ENCODE measurements at regions of chr7 and their contacts with region 1.

Region 1: DNA sequence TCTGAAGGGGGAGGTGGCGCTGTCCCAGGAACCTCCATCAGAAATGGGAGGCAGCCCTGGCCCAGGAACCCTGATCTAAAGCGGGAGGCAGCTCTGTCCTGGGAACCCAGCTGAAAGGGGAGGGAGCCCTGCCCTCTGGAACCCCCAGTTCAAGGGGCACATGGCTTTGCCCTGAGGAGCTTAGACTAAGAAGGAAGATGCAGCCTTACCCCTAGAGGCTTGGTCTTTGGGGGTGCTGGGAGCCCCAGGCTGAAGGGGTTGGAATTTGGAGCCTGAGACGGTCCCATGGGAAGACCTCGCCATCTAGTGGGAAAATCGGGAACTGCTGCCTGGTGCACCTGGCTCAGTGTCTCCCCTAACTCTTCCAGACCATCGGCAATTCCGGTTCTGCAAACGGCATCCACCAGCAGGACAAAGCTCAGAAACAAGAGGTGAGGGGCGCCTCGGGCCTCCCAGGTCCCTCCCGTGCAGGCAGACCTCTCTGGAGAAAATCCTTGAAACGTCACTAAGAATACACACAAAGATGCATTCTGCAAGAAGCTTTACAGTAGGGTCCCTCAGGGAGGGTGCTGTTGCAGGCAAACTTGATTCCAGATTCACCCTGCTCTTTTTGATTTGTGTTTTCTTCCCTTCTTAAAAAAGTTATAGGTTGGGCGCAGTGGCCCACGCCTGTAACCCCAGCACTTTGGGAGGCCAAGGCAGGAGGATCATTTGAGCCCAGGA is 52.4 kb upstream of the GTF2IRD1 start:
- DNase-seq: peak; percentile 46 to 84 (median 76)
- ATAC-seq: peak; percentile 73
- H3K4me3 ChIP-seq: no peak overlapping the region
- H3K4me3 Mint-ChIP-seq: no peak overlapping the region
- H3K27ac ChIP-seq: no peak overlapping the region
- H3K27ac Mint-ChIP-seq: no peak overlapping the region
- H3K4me1 ChIP-seq: no peaks in the 10 kb centered on the region
- H3K4me1 Mint-ChIP-seq: no peaks in the 10 kb centered on the region
- H3K27me3 ChIP-seq: no peaks in the 10 kb centered on the region
- H3K27me3 Mint-ChIP-seq: no peaks in the 10 kb centered on the region
- CTCF ChIP-seq: peak; percentile 88

Region 2: DNA sequence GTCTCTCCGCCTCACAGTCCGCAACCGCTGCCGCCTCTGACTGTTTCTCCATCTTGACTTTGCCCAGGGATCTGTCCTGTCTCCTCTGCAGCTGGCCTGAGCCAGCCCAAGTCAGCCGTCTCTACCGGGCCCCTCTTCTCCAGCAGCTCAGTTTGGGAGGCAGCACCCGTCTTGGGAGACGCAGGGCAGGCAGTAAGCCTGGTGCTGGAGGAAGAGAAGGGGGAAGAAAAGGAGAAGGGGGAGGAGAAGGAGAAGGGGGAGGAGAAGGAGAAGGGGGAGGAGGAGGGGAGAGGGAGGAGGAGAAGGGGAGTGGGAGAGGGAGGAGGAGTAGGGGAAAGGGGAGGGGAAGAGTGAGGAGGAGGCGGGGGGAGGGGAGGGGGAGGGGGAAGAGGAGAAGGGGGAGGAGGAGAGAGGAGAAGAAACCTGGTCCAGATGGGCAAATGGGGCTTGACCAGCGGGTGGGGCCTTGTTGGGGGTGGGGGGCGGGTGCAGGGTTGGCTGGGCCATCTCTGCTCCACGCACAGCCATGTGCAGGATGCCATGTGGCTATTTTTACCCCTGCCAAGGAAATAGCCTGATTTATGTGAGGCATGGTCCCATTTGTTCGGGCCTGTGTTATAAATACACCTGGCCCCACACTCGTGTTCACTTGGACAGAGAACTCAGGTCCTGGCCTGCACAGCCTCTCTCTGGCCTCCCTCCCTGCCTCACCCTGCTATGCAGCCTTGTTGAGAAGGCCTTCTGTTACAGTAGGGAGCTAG is 1003.6 kb before region 1 on chr7:
- CTCF ChIA-PET with region 1: no interaction called
- POLR2A ChIA-PET with region 1: no interaction called
- intact Hi-C with region 1: no loop called
- DNase-seq: no peak
- ATAC-seq: no peak
- H3K4me3 ChIP-seq: no peak overlapping the region
- H3K4me3 Mint-ChIP-seq: no peak overlapping the region
- H3K27ac ChIP-seq: no peak overlapping the region
- H3K27ac Mint-ChIP-seq: no peak overlapping the region
- H3K4me1 ChIP-seq: no peaks in the 10 kb centered on the region
- H3K4me1 Mint-ChIP-seq: peaks cover 4% of the 10 kb centered on the region
- H3K27me3 ChIP-seq: peaks cover 0 to 2% of the 10 kb centered on the region in 2 experiments
- H3K27me3 Mint-ChIP-seq: peaks cover 3% of the 10 kb centered on the region
- CTCF ChIP-seq: no peak

Region 3: DNA sequence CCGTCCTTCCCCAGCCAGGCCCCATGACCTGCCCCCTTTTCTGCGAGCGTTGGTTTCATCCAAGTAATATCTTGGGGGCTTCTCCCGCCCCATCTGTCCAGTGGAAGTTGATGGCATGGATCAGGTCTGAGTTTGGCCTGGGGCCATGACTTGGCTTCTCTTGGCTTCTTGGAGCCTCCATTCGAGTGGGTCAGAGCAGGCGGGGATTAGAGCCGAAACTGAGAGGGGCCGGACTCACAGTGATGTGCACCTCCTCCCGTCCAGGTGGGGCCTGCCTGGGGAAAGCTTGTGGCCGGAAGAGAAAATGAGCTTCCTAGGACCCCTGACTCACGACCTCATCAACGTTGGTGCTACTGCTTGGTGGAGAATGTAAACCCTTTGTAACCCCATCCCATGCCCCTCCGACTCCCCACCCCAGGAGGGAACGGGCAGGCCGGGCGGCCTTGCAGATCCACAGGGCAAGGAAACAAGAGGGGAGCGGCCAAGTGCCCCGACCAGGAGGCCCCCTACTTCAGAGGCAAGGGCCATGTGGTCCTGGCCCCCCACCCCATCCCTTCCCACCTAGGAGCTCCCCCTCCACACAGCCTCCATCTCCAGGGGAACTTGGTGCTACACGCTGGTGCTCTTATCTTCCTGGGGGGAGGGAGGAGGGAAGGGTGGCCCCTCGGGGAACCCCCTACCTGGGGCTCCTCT is 332.8 kb before region 1 on chr7:
- CTCF ChIA-PET with region 1: interaction called, 74 read pairs
- POLR2A ChIA-PET with region 1: no interaction called
- intact Hi-C with region 1: loop called in 1 of 2 experiments (anchors 1 kb)
- DNase-seq: no peak
- ATAC-seq: no peak
- H3K4me3 ChIP-seq: no peak overlapping the region
- H3K4me3 Mint-ChIP-seq: no peak overlapping the region
- H3K27ac ChIP-seq: no peak overlapping the region
- H3K27ac Mint-ChIP-seq: no peak overlapping the region
- H3K4me1 ChIP-seq: no peaks in the 10 kb centered on the region
- H3K4me1 Mint-ChIP-seq: peaks cover 2% of the 10 kb centered on the region
- H3K27me3 ChIP-seq: no peaks in the 10 kb centered on the region
- H3K27me3 Mint-ChIP-seq: no peaks in the 10 kb centered on the region
- CTCF ChIP-seq: no peak

Region 4: DNA sequence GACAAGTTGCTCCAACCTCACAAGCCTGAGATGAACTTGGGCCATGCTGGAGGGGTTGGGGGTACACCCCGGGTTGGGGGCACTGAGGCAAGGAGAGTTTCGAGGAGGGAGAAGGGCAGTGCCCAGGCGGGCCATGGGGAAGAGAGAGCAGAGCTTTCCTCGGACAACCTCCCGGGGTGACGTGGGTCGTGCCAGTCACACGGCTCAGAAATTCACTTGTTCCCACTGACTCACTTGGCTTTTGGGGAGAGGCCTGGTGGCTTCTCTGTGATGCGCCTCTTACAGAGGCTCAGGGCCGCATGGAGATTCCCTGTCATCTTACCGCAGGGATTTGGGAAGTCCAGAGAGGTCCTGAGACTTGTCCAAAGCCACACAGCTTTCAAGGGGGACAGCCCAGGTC is 188.6 kb before region 1 on chr7:
- CTCF ChIA-PET with region 1: interaction called, 147 read pairs
- POLR2A ChIA-PET with region 1: no interaction called
- intact Hi-C with region 1: no loop called
- DNase-seq: no peak
- ATAC-seq: no peak
- H3K4me3 ChIP-seq: no peak overlapping the region
- H3K4me3 Mint-ChIP-seq: no peak overlapping the region
- H3K27ac ChIP-seq: no peak overlapping the region
- H3K27ac Mint-ChIP-seq: no peak overlapping the region
- H3K4me1 ChIP-seq: peaks cover 11% of the 10 kb centered on the region
- H3K4me1 Mint-ChIP-seq: peaks cover 15% of the 10 kb centered on the region
- H3K27me3 ChIP-seq: no peaks in the 10 kb centered on the region
- H3K27me3 Mint-ChIP-seq: peaks cover 6% of the 10 kb centered on the region
- CTCF ChIP-seq: no peak

Region 5: GRCh38 chr7:74289018-74289658 is 112.2 kb before region 1 on chr7 and contains the start of gene CLIP2:
- CTCF ChIA-PET with region 1: interaction called, 5 read pairs
- POLR2A ChIA-PET with region 1: no interaction called
- intact Hi-C with region 1: loop called in 1 of 2 experiments (anchors 1 kb)
- DNase-seq: peak; percentile 59 to 87 (median 76)
- ATAC-seq: peak; percentile 85
- H3K4me3 ChIP-seq: peak within 1 kb of the TSS; percentile 54 to 75
- H3K4me3 Mint-ChIP-seq: peak within 1 kb of the TSS; percentile 89
- H3K27ac ChIP-seq: no peak within 1 kb of the TSS
- H3K27ac Mint-ChIP-seq: no peak within 1 kb of the TSS
- H3K4me1 ChIP-seq: peaks cover 22% of the 10 kb centered on the region
- H3K4me1 Mint-ChIP-seq: peaks cover 22% of the 10 kb centered on the region
- H3K27me3 ChIP-seq: no peaks in the 10 kb centered on the region
- H3K27me3 Mint-ChIP-seq: peaks cover 8% of the 10 kb centered on the region
- CTCF ChIP-seq: no peak
- total RNA-seq, gene CLIP2: 2.1 to 2.7 TPM

Region 6: GRCh38 chr7:74306730-74307469 is 94.4 kb before region 1 on chr7:
- CTCF ChIA-PET with region 1: no interaction called
- POLR2A ChIA-PET with region 1: no interaction called
- intact Hi-C with region 1: no loop called
- DNase-seq: peak in 1 of 9 experiments; percentile 7
- ATAC-seq: peak; percentile 58
- H3K4me3 ChIP-seq: peak overlapping the region; percentile 12 to 18
- H3K4me3 Mint-ChIP-seq: peak overlapping the region; percentile 72
- H3K27ac ChIP-seq: no peak overlapping the region
- H3K27ac Mint-ChIP-seq: no peak overlapping the region
- H3K4me1 ChIP-seq: peaks cover 16% of the 10 kb centered on the region
- H3K4me1 Mint-ChIP-seq: peaks cover 13% of the 10 kb centered on the region
- H3K27me3 ChIP-seq: peaks cover 0 to 4% of the 10 kb centered on the region in 2 experiments
- H3K27me3 Mint-ChIP-seq: peaks cover 3% of the 10 kb centered on the region
- CTCF ChIP-seq: no peak

Region 7: GRCh38 chr7:74412056-74412455 is 10.8 kb after region 1 on chr7:
- CTCF ChIA-PET with region 1: interaction called, 16 read pairs
- POLR2A ChIA-PET with region 1: no interaction called
- intact Hi-C with region 1: no loop called
- DNase-seq: no peak
- ATAC-seq: no peak
- H3K4me3 ChIP-seq: no peak overlapping the region
- H3K4me3 Mint-ChIP-seq: no peak overlapping the region
- H3K27ac ChIP-seq: no peak overlapping the region
- H3K27ac Mint-ChIP-seq: no peak overlapping the region
- H3K4me1 ChIP-seq: no peaks in the 10 kb centered on the region
- H3K4me1 Mint-ChIP-seq: no peaks in the 10 kb centered on the region
- H3K27me3 ChIP-seq: no peaks in the 10 kb centered on the region
- H3K27me3 Mint-ChIP-seq: no peaks in the 10 kb centered on the region
- CTCF ChIP-seq: no peak

Region 8: GRCh38 chr7:74455291-74455804 is 54.0 kb after region 1 on chr7:
- CTCF ChIA-PET with region 1: no interaction called
- POLR2A ChIA-PET with region 1: no interaction called
- intact Hi-C with region 1: no loop called
- DNase-seq: no peak
- ATAC-seq: no peak
- H3K4me3 ChIP-seq: no peak overlapping the region
- H3K4me3 Mint-ChIP-seq: peak overlapping the region; percentile 67
- H3K27ac ChIP-seq: no peak overlapping the region
- H3K27ac Mint-ChIP-seq: no peak overlapping the region
- H3K4me1 ChIP-seq: peaks cover 14% of the 10 kb centered on the region
- H3K4me1 Mint-ChIP-seq: peaks cover 14% of the 10 kb centered on the region
- H3K27me3 ChIP-seq: peaks cover 0 to 10% of the 10 kb centered on the region in 2 experiments
- H3K27me3 Mint-ChIP-seq: peaks cover 10% of the 10 kb centered on the region
- CTCF ChIP-seq: no peak

Region 9: GRCh38 chr7:74554178-74554577 is 152.9 kb after region 1 on chr7:
- CTCF ChIA-PET with region 1: no interaction called
- POLR2A ChIA-PET with region 1: no interaction called
- intact Hi-C with region 1: no loop called
- DNase-seq: no peak
- ATAC-seq: no peak
- H3K4me3 ChIP-seq: no peak overlapping the region
- H3K4me3 Mint-ChIP-seq: no peak overlapping the region
- H3K27ac ChIP-seq: no peak overlapping the region
- H3K27ac Mint-ChIP-seq: no peak overlapping the region
- H3K4me1 ChIP-seq: no peaks in the 10 kb centered on the region
- H3K4me1 Mint-ChIP-seq: no peaks in the 10 kb centered on the region
- H3K27me3 ChIP-seq: no peaks in the 10 kb centered on the region
- H3K27me3 Mint-ChIP-seq: no peaks in the 10 kb centered on the region
- CTCF ChIP-seq: no peak